ENCODE measurements at regions of chr1 and their contacts with region 1.

Region 1: DNA sequence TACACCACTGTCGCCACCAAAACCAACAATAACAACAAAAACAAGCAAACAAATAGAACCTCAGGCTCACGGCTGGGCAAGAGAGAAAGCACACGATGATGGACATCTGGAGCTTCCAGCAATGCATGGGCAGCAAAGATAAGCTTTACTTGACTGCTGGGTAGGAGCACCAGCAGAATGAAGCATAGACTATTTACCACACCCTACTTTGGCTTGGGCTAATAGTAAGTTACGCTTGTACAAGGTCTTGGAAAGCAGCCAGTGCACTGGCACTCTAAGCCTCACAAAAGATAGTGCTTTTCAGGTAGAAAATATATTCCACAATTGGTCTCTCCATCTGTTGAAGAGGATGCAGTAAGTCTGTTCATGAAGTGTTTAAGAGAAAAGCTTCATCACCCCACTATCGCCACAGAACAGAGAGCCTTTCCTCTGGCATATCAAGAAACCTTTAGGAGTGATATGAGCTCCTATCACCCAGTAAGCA is 13.6 kb downstream of the ADIPOR1 start:
- DNase-seq: peak; percentile 80 to 93 (median 88)
- ATAC-seq: peak; percentile 94
- H3K4me3 ChIP-seq: no peak overlapping the region
- H3K27ac ChIP-seq: peak overlapping the region; percentile 58
- H3K4me1 ChIP-seq: peaks cover 2 to 28% of the 10 kb centered on the region in 2 experiments; a peak in 3 of 5 replicates
- H3K27me3 ChIP-seq: no peaks in the 10 kb centered on the region
- CTCF ChIP-seq: 0 out of 6 replicates have a peak, but pooled peaks of 1 of the 3 experiments have one; percentile 1
- EP300 ChIP-seq: peak; percentile 73
- POLR2A ChIP-seq: no peak
- RAD21 ChIP-seq: no peak

Region 2: DNA sequence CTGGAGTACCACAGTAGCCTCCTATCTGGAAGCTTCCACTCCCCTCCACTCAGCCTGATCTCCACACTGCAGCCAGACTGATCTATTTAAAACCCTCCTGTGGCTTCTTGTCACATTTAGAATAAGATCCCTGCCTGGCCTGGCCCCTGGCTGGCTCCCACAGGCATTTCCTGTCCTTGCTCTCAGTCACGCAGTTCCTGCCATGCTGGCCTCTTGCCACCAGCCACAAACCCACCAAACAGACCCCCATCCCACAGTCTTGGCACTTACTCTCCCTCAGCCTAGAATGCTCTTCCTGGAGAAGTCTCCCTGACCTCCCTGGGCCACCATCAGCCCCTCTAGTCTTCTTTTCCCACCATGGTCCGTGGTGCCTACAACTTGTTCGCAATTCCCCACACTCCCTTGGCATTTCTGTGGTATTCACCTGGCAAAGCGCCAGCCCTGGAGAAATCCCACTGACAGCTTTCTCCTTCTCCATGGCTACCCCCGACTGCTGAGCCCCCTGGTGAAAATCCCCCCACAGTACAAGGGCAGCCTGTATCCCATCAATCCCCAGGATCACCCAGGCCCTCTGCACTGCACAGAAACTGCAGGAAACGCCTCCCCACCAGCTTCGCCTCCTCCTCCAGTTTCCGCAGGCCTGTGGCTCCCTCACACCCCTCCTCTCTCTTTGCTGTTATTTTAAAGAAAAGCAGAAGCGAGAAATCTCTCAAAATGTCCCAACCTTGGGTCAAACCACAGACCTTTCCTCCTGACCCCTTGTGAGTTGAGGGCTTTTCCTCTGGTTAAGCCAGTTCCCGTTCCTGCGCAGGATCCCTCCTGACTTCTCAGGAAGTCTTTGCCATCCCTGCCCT is 328.8 kb before region 1 on chr1:
- CTCF ChIA-PET with region 1: no interaction called
- POLR2A ChIA-PET with region 1: no interaction called
- in situ Hi-C with region 1: no loop called
- intact Hi-C with region 1: no loop called
- DNase-seq: no peak
- ATAC-seq: no peak
- H3K4me3 ChIP-seq: no peak overlapping the region
- H3K27ac ChIP-seq: no peak overlapping the region
- H3K4me1 ChIP-seq: no peaks in the 10 kb centered on the region
- H3K27me3 ChIP-seq: peaks cover 10 to 67% of the 10 kb centered on the region in 2 experiments; a peak in 4 of 5 replicates
- CTCF ChIP-seq: no peak
- EP300 ChIP-seq: no peak
- POLR2A ChIP-seq: no peak
- RAD21 ChIP-seq: no peak

Region 3: DNA sequence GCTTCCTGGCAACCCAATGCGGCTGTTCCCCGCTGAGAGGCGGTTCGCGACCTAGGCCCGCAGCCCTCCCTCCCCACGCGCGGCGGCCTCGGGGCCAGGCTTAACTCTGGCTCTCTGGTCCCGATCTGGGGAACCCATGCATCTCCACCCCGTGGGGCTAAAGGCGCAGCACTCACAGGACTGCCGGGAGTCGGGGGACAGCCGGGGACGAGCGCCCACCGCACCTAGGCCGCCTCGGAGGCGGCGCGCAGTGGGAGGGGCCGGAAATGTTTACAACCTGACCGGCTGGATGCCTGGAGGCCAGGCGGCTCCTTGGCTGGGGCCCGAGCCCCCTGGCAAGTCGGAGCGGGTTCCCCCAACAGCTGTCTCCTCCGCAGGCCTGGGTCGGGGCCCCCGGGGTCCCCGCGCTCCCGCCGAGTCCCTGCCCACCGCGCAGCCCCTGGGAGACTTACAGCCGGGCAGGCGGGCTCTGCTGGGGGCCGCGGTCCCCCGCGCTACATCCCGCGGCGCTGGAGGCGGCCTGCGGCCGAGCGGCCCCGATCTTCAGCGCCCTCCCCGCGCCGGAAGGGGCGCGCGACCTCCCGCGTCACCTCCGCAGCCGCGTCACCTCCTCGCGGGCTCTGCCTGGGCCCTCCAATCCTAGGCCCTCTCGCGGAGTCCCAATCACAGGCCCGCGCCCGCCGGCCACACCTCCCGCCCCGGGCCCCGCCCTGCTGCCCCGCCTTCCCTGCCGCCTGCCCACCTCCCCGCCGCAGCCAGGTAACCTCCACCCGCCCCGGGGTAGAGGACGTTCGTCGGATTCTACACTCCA is 13.5 kb after region 1 on chr1 and contains the start of gene ADIPOR1:
- CTCF ChIA-PET with region 1: no interaction called
- POLR2A ChIA-PET with region 1: interaction called, 65 read pairs
- in situ Hi-C with region 1: no loop called
- intact Hi-C with region 1: no loop called
- DNase-seq: peak; percentile 96 to 99 (median 98)
- ATAC-seq: peak; percentile 97
- H3K4me3 ChIP-seq: peak within 1 kb of the TSS; percentile 97
- H3K27ac ChIP-seq: peak within 1 kb of the TSS; percentile 90
- H3K4me1 ChIP-seq: peaks cover 15 to 34% of the 10 kb centered on the region in 2 experiments
- H3K27me3 ChIP-seq: no peaks in the 10 kb centered on the region
- CTCF ChIP-seq: peak in 2 of 3 experiments; percentile 3 to 21; a peak in 1 of 6 replicates
- EP300 ChIP-seq: no peak
- POLR2A ChIP-seq: peak; percentile 87
- RAD21 ChIP-seq: peak in 1 of 2 experiments; percentile 0; a peak in 1 of 4 replicates
- polyA plus RNA-seq, gene ADIPOR1: 29.0 to 33.4 TPM

Region 4: GRCh38 chr1:202968840-202969295 is 24.4 kb after region 1 on chr1:
- CTCF ChIA-PET with region 1: no interaction called
- POLR2A ChIA-PET with region 1: interaction called, 6 read pairs
- in situ Hi-C with region 1: no loop called
- intact Hi-C with region 1: loop called (anchors 1 kb)
- DNase-seq: peak; percentile 74 to 90 (median 81)
- ATAC-seq: peak; percentile 90
- H3K4me3 ChIP-seq: no peak overlapping the region
- H3K27ac ChIP-seq: no peak overlapping the region; the same call in 2 of the 3 replicates
- H3K4me1 ChIP-seq: peaks cover 20 to 24% of the 10 kb centered on the region in 2 experiments
- H3K27me3 ChIP-seq: no peaks in the 10 kb centered on the region; a peak in 1 of 5 replicates
- CTCF ChIP-seq: peak; percentile 94 to 96 (median 95)
- EP300 ChIP-seq: peak; percentile 41; the same call in 1 of the 2 replicates
- POLR2A ChIP-seq: no peak
- RAD21 ChIP-seq: peak; percentile 69 to 80

Region 5: GRCh38 chr1:202981939-202982338 is 37.5 kb after region 1 on chr1:
- CTCF ChIA-PET with region 1: no interaction called
- POLR2A ChIA-PET with region 1: interaction called, 10 read pairs
- in situ Hi-C with region 1: no loop called
- intact Hi-C with region 1: no loop called
- DNase-seq: peak in 2 of 4 experiments; percentile 7 to 61
- ATAC-seq: peak; percentile 87
- H3K4me3 ChIP-seq: no peak overlapping the region
- H3K27ac ChIP-seq: peak overlapping the region; percentile 14; the same call in 1 of the 3 replicates
- H3K4me1 ChIP-seq: peaks cover 0 to 7% of the 10 kb centered on the region in 2 experiments; a peak in 3 of 5 replicates
- H3K27me3 ChIP-seq: peaks cover 0 to 4% of the 10 kb centered on the region in 2 experiments; a peak in 1 of 5 replicates
- CTCF ChIP-seq: no peak
- EP300 ChIP-seq: peak; percentile 59; the same call in 1 of the 2 replicates
- POLR2A ChIP-seq: no peak
- RAD21 ChIP-seq: no peak

Measured in K562 (cell line).